Colonic mucosa (tissue), 4 donors: ENCODE measurements at regions of chr2 and their contacts with region 1.

Region 1: GRCh38 chr2:174603280-174603679 is 5.7 kb upstream of the WIPF1 start:
- DNase-seq: peak; percentile 57
- H3K4me3 ChIP-seq: no peak overlapping the region
- H3K27ac ChIP-seq: no peak overlapping the region
- H3K4me1 ChIP-seq: no peaks in the 10 kb centered on the region
- H3K27me3 ChIP-seq: no peaks in the 10 kb centered on the region
- CTCF ChIP-seq: peak; percentile 34

Region 2: DNA sequence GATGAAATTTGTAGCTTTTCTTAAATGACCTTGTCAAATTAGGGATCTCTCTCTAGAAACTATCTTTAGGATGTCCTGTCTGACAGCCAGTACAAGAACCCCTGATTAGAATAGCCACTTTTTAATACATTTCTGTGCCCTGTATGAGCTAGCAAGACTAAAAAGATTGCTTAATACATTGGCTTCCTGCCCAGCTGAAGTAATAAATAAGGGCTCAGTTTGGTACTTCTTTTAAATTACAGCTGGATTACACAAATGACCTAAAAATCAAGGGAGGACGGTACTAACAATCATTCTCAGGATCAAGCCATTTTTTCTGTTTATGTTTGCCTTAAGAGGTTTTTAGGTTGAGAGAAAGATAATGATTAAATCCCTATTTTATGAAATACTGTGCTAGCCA is 343.3 kb before region 1 on chr2:
- intact Hi-C with region 1: no loop called
- DNase-seq: no peak
- H3K4me3 ChIP-seq: no peak overlapping the region
- H3K27ac ChIP-seq: no peak overlapping the region
- H3K4me1 ChIP-seq: no peaks in the 10 kb centered on the region
- H3K27me3 ChIP-seq: no peaks in the 10 kb centered on the region
- CTCF ChIP-seq: no peak

Region 3: DNA sequence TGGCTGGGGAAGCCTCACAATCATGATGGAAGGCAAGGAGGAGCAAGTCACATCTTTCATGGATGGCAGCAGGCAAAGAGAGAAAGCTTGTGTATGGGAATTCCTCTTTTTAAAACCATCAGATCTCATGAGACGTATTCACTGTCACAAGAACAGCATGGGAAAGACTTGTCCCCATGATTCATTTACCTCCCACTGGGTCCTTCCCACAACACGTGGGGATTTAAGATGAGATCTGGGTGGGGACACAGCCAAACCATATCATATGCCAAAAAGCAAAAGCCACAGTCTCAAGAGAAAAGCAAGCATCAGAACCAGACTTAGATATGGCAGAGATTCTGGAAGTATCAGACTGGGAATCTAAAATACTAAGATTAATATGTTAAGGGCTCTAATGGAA is 237.7 kb before region 1 on chr2:
- intact Hi-C with region 1: no loop called
- DNase-seq: no peak
- H3K4me3 ChIP-seq: no peak overlapping the region
- H3K27ac ChIP-seq: no peak overlapping the region
- H3K4me1 ChIP-seq: no peaks in the 10 kb centered on the region
- H3K27me3 ChIP-seq: no peaks in the 10 kb centered on the region
- CTCF ChIP-seq: no peak

Region 4: DNA sequence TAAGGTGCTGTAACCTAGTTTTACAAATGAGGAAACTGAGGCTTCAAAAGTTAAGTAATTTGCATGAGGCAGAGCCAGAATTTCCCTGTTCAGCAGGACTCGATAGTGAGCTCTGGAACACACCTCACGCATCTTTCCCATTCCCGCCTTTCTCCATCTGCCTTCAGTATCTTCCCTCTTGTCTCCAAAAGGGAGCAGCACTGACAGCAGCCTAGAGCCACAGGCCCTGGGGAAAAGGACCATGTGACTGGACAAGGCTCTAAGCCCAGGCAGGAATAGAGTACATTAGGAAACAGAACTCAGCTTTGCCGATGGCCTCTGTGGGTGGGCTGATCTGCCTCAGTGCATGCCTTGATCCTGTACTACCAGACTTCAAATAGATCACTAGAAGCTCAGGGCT is 138.0 kb before region 1 on chr2:
- intact Hi-C with region 1: loop called (anchors 5 kb)
- DNase-seq: no peak
- H3K4me3 ChIP-seq: no peak overlapping the region
- H3K27ac ChIP-seq: no peak overlapping the region
- H3K4me1 ChIP-seq: no peaks in the 10 kb centered on the region
- H3K27me3 ChIP-seq: no peaks in the 10 kb centered on the region
- CTCF ChIP-seq: no peak